ENCODE measurements at regions of chr7 and their contacts with region 1.

Region 1: DNA sequence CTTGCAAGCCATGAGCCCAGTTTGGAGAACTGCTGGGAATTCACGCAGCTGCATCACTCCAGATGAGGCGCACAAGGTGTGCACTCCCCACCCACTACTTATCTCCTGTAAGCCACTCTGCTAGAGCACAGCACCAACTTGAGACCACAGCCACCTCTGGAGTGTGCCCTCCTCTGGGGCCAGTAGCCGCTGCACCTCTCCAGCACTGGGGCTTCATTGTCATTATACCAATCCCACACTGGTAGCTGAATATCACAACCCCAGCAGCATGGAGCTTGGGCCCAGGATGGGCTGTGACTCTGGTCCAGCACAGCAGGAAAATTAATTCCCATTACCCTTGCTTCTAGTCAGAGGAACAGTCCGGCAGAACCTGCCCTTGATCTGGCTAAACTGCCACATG is 125.6 kb downstream of the LSM5 start:
- DNase-seq: no peak
- H3K4me3 ChIP-seq: no peak overlapping the region
- H3K27ac ChIP-seq: no peak overlapping the region
- H3K4me1 ChIP-seq: no peaks in the 10 kb centered on the region
- H3K27me3 ChIP-seq: peaks cover 62% of the 10 kb centered on the region
- CTCF ChIP-seq: no peak

Region 2: DNA sequence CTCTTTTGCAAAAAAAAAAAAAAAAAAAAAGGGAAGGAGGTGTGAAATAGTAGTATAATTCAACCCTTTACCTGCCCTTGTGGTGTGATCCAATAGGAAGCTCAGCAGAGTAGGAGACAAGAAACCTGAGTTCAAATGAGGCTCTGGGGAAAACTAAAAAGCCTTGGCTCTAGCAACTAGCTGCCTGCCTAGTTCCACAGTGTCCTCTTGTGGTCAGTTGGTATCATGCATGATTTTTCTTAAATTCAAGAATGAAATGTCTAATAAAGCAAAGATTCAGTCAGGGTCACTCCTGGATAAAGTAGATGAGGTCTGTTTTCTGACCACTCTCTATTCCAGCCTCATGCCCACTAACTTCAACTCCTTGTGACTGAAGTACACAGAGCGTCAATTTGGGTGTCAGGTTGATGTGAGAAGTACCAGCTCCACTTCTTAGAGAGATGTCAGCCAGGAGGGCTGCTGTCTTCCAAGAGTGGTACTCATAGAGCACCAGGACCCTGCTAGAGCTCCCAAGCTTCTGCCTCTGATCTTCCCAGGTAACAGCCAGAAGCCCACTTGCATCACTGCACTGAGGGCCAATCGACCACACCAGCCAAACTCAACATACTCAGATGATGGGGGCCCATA is 115.1 kb after region 1 on chr7:
- CTCF ChIA-PET with region 1: no interaction called
- POLR2A ChIA-PET with region 1: no interaction called
- intact Hi-C with region 1: loop called (anchors 10 kb)
- DNase-seq: peak in 1 of 2 experiments; percentile 44
- H3K4me3 ChIP-seq: no peak overlapping the region
- H3K27ac ChIP-seq: no peak overlapping the region
- H3K4me1 ChIP-seq: no peaks in the 10 kb centered on the region
- H3K27me3 ChIP-seq: no peaks in the 10 kb centered on the region; the same call in 1 of the 2 replicates
- CTCF ChIP-seq: peak; percentile 97

Region 3: DNA sequence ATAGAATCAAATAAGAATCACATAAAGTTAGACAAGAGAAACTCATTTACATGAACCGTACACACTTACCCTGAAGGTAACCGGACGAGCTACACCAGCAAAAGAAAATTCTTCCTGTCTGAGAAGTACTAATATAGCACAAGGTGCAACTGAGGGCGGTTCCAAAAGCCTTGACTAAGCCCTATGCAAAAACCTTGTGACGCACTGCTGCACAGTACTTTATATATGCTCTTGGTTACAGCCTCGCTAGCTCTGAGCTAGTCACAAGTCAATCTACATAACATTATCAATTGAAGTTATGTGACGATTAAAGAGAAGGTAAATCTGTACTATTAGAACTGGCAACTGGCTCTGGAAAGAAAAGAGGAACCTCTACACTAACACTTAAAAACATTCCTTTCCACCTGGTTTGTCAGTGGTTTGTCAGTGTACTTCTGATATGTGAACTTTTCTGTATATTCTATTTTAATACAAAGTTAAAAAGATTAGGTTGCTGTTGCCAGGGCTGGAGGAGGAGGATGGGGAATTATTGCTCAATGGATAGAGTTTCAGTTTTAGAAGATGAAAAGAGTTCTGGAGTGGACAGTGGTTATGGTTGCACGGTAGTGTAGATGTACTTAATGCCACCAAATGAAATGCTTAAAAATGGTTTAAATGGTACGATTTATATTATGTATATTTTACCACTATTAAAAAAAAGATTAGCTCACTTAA is 676.4 kb after region 1 on chr7:
- CTCF ChIA-PET with region 1: no interaction called
- POLR2A ChIA-PET with region 1: no interaction called
- intact Hi-C with region 1: no loop called
- DNase-seq: peak; percentile 61 to 71
- H3K4me3 ChIP-seq: no peak overlapping the region
- H3K27ac ChIP-seq: peak overlapping the region; percentile 6; the same call in 1 of the 2 replicates
- H3K4me1 ChIP-seq: peaks cover 27% of the 10 kb centered on the region
- H3K27me3 ChIP-seq: no peaks in the 10 kb centered on the region
- CTCF ChIP-seq: no peak

Measured in PC-9 (cell line).